ENCODE measurements at regions of chr15 and their contacts with region 1.

Region 1: GRCh38 chr15:44968475-44968874 is 12.0 kb downstream of the TERB2 start:
- DNase-seq: no peak
- ATAC-seq: no peak
- H3K4me3 ChIP-seq: no peak overlapping the region
- H3K27ac ChIP-seq: no peak overlapping the region
- H3K4me1 ChIP-seq: no peaks in the 10 kb centered on the region
- CTCF ChIP-seq: no peak
- EP300 ChIP-seq: no peak
- POLR2A ChIP-seq: no peak
- RAD21 ChIP-seq: no peak

Region 2: GRCh38 chr15:45037936-45038335 is 69.5 kb after region 1 on chr15:
- CTCF ChIA-PET with region 1: interaction called, 12 read pairs
- POLR2A ChIA-PET with region 1: no interaction called
- DNase-seq: no peak
- ATAC-seq: no peak
- H3K4me3 ChIP-seq: no peak overlapping the region
- H3K27ac ChIP-seq: no peak overlapping the region
- H3K4me1 ChIP-seq: no peaks in the 10 kb centered on the region
- CTCF ChIP-seq: no peak
- EP300 ChIP-seq: no peak
- POLR2A ChIP-seq: no peak
- RAD21 ChIP-seq: no peak

Region 3: DNA sequence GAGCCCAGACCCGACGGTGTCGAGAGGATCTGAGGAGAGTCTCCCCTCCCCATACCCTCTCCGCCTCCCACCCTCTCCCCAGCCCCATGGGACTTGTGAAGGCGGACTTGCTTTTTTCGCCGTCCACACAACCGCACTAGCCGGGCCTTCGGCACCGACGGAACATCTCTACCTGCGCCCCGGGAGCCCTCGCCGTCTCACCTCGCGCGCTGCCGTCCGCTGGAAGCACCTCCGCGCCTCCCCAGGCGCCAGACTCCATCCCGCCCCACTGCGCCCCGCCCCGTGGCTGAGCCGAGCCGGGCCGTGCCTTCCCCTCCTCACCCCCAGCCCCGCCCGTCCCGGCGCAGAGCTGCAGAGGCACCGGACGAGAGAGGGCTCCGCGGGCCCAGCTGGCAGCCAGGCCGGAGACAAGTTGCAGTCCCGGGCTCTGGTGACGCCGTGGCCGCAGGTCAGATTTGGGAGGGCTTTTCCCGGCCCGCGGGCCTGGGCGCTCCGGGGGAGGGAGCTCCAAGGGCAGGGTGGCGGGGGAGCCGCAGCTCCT is 161.2 kb after region 1 on chr15 and contains the starts of genes DUOX1 and DUOXA1:
- CTCF ChIA-PET with region 1: no interaction called
- POLR2A ChIA-PET with region 1: no interaction called
- DNase-seq: no peak
- ATAC-seq: no peak
- H3K4me3 ChIP-seq: no peak within 1 kb of the TSS
- H3K27ac ChIP-seq: no peak within 1 kb of the TSS
- H3K4me1 ChIP-seq: no peaks in the 10 kb centered on the region
- CTCF ChIP-seq: no peak
- EP300 ChIP-seq: no peak
- POLR2A ChIP-seq: no peak
- RAD21 ChIP-seq: no peak
- polyA plus RNA-seq, gene DUOX1: not detected in 2 replicates
- polyA plus RNA-seq, gene DUOXA1: 0.18 and 0.24 TPM in 2 replicates

Measured in A549 (cell line).